Right cardiac atrium (tissue), 5 donors: ENCODE measurements at regions of chrX and their contacts with region 1.

Region 1: DNA sequence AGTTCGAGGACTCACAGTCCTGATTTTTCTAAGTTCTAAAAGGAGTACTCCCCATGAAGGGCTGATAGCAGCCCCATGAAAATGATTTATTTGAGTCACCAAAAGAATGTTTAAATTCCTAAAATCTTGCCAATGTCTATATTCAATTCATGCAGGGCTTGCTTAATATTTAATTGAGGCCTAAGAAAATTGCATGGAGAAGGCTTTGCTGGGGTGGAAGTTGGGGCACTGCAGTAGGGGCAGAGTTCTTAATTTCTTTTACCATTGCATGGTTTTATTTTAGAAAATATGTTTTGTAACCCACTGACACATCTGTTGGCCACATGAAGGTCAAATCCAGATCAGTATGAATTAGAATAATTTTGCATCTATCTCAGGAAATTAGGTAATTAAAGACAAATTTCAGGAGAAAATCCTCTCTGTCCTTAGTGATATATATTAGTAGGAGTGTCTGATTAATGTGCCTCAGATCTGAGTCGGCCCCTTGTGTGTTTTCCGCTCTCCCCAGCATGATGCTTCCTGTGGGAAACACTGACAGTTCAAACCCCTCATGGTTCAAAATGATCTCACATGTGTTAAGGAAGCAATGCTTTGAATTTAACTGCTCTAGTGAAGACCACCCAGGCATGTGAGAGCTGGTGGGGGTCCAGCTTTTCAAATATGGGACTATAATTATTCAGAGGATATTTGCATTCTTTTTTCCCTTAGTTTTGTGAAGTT is 54.0 kb upstream of the EGFL6 start:
- DNase-seq: no peak
- ATAC-seq: no peak
- H3K4me3 ChIP-seq: no peak overlapping the region
- H3K27ac ChIP-seq: no peak overlapping the region
- H3K4me1 ChIP-seq: no peaks in the 10 kb centered on the region
- H3K27me3 ChIP-seq: no peaks in the 10 kb centered on the region

Region 2: GRCh38 chrX:13569479-13570260 is 54.3 kb after region 1 on chrX and contains the start of gene EGFL6:
- intact Hi-C with region 1: no loop called
- DNase-seq: peak in 2 of 3 donors; percentile 24 to 41
- ATAC-seq: no peak
- H3K4me3 ChIP-seq: peak within 1 kb of the TSS; percentile 18
- H3K27ac ChIP-seq: no peak within 1 kb of the TSS
- H3K4me1 ChIP-seq: peaks cover 4% of the 10 kb centered on the region
- H3K27me3 ChIP-seq: no peaks in the 10 kb centered on the region
- total RNA-seq, gene EGFL6: not detected

Region 3: DNA sequence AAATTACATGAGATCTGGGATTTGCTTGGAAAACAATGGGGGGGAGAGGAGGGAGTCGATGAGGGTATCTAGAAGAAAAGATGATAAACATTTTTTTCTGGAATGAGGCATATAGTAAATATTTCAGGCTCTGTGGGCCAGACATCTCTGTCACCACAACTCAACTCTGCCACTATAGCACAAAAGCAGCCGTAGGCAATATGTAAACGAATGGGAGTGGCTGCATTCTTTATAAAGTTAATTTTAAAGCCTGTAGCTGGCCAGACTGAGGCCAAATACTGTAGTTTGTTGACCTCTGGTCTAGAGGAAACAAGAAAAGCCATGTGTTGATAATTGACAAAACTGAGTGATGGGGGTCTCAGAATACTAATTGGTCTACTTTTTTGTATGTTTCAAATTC is 123.5 kb after region 1 on chrX:
- intact Hi-C with region 1: loop called in 1 of 4 experiments (anchors 5 kb)
- DNase-seq: no peak
- ATAC-seq: no peak
- H3K4me3 ChIP-seq: no peak overlapping the region
- H3K27ac ChIP-seq: no peak overlapping the region
- H3K4me1 ChIP-seq: no peaks in the 10 kb centered on the region
- H3K27me3 ChIP-seq: no peaks in the 10 kb centered on the region